ENCODE measurements at regions of chr22 and their contacts with region 1.

Region 1: DNA sequence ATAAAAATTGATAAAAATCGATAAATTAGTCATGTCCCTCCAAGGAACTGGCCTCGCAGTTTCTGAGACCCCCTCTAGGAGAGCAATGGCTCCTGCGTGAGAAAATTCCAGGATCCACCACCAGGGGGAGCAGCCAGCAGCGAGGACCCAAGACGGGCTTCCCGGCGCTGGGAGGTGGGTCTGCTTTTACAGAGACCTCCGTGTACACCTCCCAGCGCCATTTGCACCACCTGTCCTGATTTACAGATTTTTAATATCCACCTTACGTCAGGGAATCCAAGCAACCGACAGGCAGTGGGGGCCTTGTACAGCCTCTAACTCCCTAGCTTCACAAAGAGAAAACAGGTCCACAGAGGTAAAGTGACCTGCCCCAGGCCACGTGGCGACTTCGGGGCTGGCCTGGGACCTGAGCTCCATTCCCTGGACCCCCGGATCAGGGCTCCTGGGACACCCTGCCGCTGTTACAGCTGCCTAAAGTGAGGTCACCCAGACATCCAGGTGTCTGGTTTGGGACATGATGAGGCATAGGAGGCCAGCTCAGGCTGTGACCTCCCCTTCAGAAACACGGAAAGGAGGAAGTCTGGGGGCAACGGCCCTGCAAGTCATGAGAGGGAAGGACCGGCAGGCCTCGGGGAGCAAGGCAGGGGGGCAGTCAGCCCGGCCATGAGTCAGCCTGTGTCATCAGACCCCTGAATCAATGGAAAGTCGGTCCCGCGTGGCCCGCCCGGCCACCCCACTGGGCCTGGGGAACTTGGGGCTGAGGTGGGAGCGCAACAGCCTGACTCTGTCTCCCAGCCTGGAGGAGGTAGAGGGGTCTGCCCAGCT is 3.5 kb downstream of the OSM start:
- DNase-seq: peak; percentile 58 to 87 (median 70)
- ATAC-seq: peak; percentile 28
- H3K4me3 ChIP-seq: no peak overlapping the region
- H3K4me3 Mint-ChIP-seq: peak overlapping the region; percentile 32 to 94 (median 48)
- H3K27ac ChIP-seq: no peak overlapping the region
- H3K27ac Mint-ChIP-seq: peak overlapping the region in 8 of 9 donors; percentile 7 to 87 (median 68)
- H3K4me1 ChIP-seq: peaks cover 27 to 38% of the 10 kb centered on the region in 2 donors
- H3K4me1 Mint-ChIP-seq: peaks cover 21 to 57% (median 39%) of the 10 kb centered on the region in 7 donors
- H3K27me3 ChIP-seq: no peaks in the 10 kb centered on the region
- H3K27me3 Mint-ChIP-seq: no peaks in the 10 kb centered on the region

Region 2: DNA sequence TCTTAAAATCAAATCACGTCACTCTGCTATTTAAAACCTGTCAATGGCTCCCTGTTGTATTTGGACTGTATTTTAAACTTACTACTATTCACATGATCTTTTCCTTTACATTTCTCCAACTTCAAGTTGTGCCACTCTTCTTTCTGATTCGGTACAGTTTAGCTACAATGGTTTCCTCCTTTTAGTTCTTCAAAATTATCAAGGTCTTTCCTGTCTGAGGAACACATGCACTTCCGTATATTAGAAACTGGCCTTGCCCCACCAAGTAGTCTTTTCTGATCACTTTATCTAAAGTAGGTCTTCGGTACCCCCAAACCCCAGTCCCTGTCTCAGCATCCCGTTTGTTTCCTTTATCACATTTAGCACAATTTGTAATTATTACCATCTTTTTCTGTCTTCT is 298.4 kb before region 1 on chr22:
- CTCF ChIA-PET with region 1: no interaction called
- POLR2A ChIA-PET with region 1: no interaction called
- intact Hi-C with region 1: no loop called
- DNase-seq: no peak
- ATAC-seq: no peak
- H3K4me3 ChIP-seq: no peak overlapping the region
- H3K4me3 Mint-ChIP-seq: no peak overlapping the region
- H3K27ac ChIP-seq: no peak overlapping the region
- H3K27ac Mint-ChIP-seq: peak overlapping the region in 1 of 9 donors; percentile 5
- H3K4me1 ChIP-seq: no peaks in the 10 kb centered on the region
- H3K4me1 Mint-ChIP-seq: peaks cover 6 to 48% (median 38%) of the 10 kb centered on the region in 7 donors
- H3K27me3 ChIP-seq: no peaks in the 10 kb centered on the region
- H3K27me3 Mint-ChIP-seq: no peaks in the 10 kb centered on the region

Region 3: DNA sequence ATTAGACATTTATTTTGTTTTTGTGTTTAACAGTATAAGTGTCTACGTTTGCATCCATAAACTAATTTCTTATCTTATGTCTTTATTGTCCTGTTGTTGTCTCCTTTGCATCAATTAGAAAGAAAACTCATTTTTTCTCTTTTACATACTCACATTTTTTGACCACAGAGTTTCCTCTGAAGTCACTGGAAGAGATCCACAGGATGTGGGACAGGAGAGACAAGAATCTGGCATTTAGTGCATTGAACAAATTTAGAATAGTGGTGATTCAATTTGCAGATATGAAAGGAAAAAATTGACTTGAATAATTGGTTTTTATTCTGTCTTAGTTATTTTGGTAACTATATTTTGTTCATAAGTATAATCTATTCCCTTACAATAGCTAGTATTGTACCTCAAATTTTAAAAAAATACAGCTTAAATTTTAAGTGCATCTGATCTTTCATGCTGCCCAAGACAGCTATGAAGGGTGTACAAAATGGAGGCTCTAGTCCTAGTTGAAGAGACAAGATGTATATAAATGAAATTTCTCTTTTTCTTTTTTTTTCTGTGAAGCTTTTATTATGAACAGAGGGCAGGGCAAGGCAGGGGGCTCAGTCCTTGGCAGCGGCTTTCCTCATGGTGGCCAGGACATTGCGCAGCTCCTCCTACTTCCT is 158.5 kb before region 1 on chr22:
- CTCF ChIA-PET with region 1: interaction called, 6 read pairs
- POLR2A ChIA-PET with region 1: no interaction called
- intact Hi-C with region 1: loop called in 1 of 2 experiments (anchors 1 kb)
- DNase-seq: peak in 6 of 9 donors; percentile 28 to 62 (median 45)
- ATAC-seq: no peak
- H3K4me3 ChIP-seq: no peak overlapping the region
- H3K4me3 Mint-ChIP-seq: peak overlapping the region in 8 of 10 donors; percentile 22 to 63 (median 42)
- H3K27ac ChIP-seq: no peak overlapping the region
- H3K27ac Mint-ChIP-seq: peak overlapping the region in 3 of 9 donors; percentile 25 to 66 (median 33)
- H3K4me1 ChIP-seq: peaks cover 0 to 16% of the 10 kb centered on the region in 2 donors
- H3K4me1 Mint-ChIP-seq: peaks cover 22 to 62% (median 46%) of the 10 kb centered on the region in 7 donors
- H3K27me3 ChIP-seq: no peaks in the 10 kb centered on the region
- H3K27me3 Mint-ChIP-seq: no peaks in the 10 kb centered on the region

Region 4: DNA sequence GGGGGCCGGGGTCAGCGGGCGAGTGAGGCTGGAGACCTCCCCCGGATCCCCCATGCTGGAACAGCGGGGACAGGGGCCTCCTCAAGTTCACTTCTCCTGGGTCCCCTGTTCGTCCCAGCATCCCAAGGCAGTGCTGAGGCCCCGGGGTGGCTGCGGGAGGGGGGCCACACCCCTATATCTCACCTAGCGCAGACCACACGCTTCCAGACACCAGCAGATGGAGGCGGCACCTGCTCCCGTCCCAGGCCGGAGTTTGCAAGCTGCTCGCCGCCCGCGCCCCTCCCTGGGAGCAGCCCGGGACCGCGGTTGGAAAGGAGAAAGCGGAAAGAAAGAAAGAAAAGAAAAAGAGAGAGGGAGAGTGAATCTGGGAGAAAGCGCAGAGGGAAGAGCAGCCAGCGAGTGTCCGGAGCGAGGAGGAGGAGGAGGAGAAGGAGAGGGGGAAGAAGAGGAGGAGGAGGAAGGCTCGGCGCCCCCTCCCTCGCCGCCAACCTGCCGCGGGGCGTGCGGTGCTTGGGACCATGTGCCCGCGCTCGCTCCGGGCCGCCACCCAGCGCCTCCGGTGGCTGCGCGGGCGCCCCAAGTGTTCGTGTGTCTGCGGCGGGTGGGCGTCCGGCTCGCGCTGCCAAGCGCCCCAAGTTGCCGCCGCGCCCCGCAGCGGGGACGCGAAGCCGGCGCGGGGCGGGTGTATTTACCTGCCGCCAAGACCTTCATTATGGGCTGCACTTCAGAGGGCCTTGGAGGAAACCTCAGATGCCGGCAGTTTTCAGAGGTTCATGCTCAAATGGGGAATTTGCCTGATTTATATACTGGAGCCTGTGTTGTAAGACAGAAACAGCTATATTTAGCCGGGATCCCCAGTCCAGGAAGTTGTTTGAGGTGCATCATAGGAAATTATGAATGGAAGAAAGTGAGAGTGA is 16.9 kb before region 1 on chr22 and contains the start of gene LIF:
- CTCF ChIA-PET with region 1: no interaction called
- POLR2A ChIA-PET with region 1: no interaction called
- intact Hi-C with region 1: loop called in 1 of 2 experiments (anchors 1 kb)
- DNase-seq: peak; percentile 30 to 77 (median 50)
- ATAC-seq: peak; percentile 85
- H3K4me3 ChIP-seq: peak within 1 kb of the TSS; percentile 58
- H3K4me3 Mint-ChIP-seq: peak within 1 kb of the TSS; percentile 77 to 97 (median 86)
- H3K27ac ChIP-seq: peak within 1 kb of the TSS; percentile 22
- H3K27ac Mint-ChIP-seq: peak within 1 kb of the TSS in 4 of 9 donors; percentile 30 to 99 (median 52)
- H3K4me1 ChIP-seq: peaks cover 0 to 18% of the 10 kb centered on the region in 2 donors
- H3K4me1 Mint-ChIP-seq: peaks cover 6 to 67% (median 26%) of the 10 kb centered on the region in 7 donors
- H3K27me3 ChIP-seq: no peaks in the 10 kb centered on the region
- H3K27me3 Mint-ChIP-seq: peaks cover 0 to 37% (median 6%) of the 10 kb centered on the region in 5 donors
- total RNA-seq, gene LIF: 0.64 to 260 (median 0.98) TPM in 3 of 5 experiments, not detected in the others

Region 5: GRCh38 chr22:30305519-30305905 is 42.4 kb after region 1 on chr22:
- CTCF ChIA-PET with region 1: interaction called, 5 read pairs
- POLR2A ChIA-PET with region 1: no interaction called
- intact Hi-C with region 1: loop called in 1 of 2 experiments (anchors 1 kb)
- DNase-seq: peak in 8 of 9 donors; percentile 56 to 75 (median 68)
- ATAC-seq: peak; percentile 67
- H3K4me3 ChIP-seq: peak overlapping the region; percentile 51
- H3K4me3 Mint-ChIP-seq: peak overlapping the region; percentile 69 to 97 (median 84)
- H3K27ac ChIP-seq: peak overlapping the region; percentile 75
- H3K27ac Mint-ChIP-seq: peak overlapping the region; percentile 87 to 99 (median 97)
- H3K4me1 ChIP-seq: peaks cover 96 to 98% of the 10 kb centered on the region in 2 donors
- H3K4me1 Mint-ChIP-seq: peaks cover 82 to 100% (median 93%) of the 10 kb centered on the region in 7 donors
- H3K27me3 ChIP-seq: no peaks in the 10 kb centered on the region
- H3K27me3 Mint-ChIP-seq: no peaks in the 10 kb centered on the region

Region 6: GRCh38 chr22:30356449-30357235 is 93.5 kb after region 1 on chr22 and contains the starts of genes CCDC157 and SF3A1:
- CTCF ChIA-PET with region 1: no interaction called
- POLR2A ChIA-PET with region 1: no interaction called
- intact Hi-C with region 1: loop called (anchors 1 kb)
- DNase-seq: peak; percentile 78 to 90 (median 86)
- ATAC-seq: peak; percentile 94
- H3K4me3 ChIP-seq: peak within 1 kb of the TSS; percentile 94
- H3K4me3 Mint-ChIP-seq: peak within 1 kb of the TSS; percentile 92 to 99 (median 95)
- H3K27ac ChIP-seq: peak within 1 kb of the TSS; percentile 100
- H3K27ac Mint-ChIP-seq: peak within 1 kb of the TSS; percentile 86 to 99 (median 95)
- H3K4me1 ChIP-seq: peaks cover 32 to 37% of the 10 kb centered on the region in 2 donors
- H3K4me1 Mint-ChIP-seq: peaks cover 35 to 62% (median 54%) of the 10 kb centered on the region in 7 donors
- H3K27me3 ChIP-seq: no peaks in the 10 kb centered on the region
- H3K27me3 Mint-ChIP-seq: peaks cover 0 to 6% (median 0%) of the 10 kb centered on the region in 5 donors
- total RNA-seq, gene CCDC157: 1.8 to 6.9 (median 3.2) TPM
- total RNA-seq, gene SF3A1: 267 to 341 (median 284) TPM

Region 7: DNA sequence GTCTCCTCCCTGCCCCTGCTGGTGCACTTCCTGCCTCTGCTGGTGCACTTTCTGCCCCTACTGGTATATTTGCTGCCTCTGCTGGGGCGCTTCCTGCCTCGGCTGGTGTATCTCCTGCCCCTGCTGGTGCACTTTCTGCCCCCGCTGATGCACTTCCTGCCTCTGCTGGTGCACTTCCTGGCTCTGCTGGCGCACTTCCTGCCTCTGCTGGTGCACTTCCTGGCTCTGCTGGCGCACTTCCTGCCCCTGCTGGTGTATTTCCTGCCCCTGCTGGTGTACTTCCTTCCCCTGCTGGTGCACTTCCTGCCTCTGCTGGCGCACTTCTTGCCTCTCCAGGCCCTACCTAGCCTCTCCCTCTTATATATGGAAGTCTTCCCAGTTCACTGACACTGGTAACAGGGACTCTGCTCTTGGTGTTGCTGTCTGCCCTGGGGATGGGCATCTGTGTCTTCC is 172.6 kb after region 1 on chr22:
- CTCF ChIA-PET with region 1: no interaction called
- POLR2A ChIA-PET with region 1: no interaction called
- intact Hi-C with region 1: loop called in 1 of 2 experiments (anchors 1 kb)
- DNase-seq: peak; percentile 45 to 97 (median 92)
- ATAC-seq: peak; percentile 94
- H3K4me3 ChIP-seq: peak overlapping the region; percentile 53
- H3K4me3 Mint-ChIP-seq: peak overlapping the region; percentile 57 to 90 (median 83)
- H3K27ac ChIP-seq: peak overlapping the region; percentile 99
- H3K27ac Mint-ChIP-seq: peak overlapping the region; percentile 88 to 100 (median 98)
- H3K4me1 ChIP-seq: peaks cover 16 to 21% of the 10 kb centered on the region in 2 donors
- H3K4me1 Mint-ChIP-seq: peaks cover 10 to 26% (median 23%) of the 10 kb centered on the region in 7 donors
- H3K27me3 ChIP-seq: peaks cover 3 to 6% of the 10 kb centered on the region in 2 donors
- H3K27me3 Mint-ChIP-seq: peaks cover 12 to 24% (median 18%) of the 10 kb centered on the region in 5 donors

Measured in naive thymus-derived CD4-positive, alpha-beta T cell (primary cell).